Activated T-helper 2 cell treated with anti-CD3 and anti-CD28 coated beads, Interferon-gamma antibody, Interleukin-2, Interleukin-4, amounts not matched to agents 10 μg/mL and 5 μg/mL and 100 μg/mL, durations not matched to agents 14 hours and 24 hours and 36 hours (primary cell): ENCODE measurements at regions of chr11 and their contacts with region 1.

Region 1: DNA sequence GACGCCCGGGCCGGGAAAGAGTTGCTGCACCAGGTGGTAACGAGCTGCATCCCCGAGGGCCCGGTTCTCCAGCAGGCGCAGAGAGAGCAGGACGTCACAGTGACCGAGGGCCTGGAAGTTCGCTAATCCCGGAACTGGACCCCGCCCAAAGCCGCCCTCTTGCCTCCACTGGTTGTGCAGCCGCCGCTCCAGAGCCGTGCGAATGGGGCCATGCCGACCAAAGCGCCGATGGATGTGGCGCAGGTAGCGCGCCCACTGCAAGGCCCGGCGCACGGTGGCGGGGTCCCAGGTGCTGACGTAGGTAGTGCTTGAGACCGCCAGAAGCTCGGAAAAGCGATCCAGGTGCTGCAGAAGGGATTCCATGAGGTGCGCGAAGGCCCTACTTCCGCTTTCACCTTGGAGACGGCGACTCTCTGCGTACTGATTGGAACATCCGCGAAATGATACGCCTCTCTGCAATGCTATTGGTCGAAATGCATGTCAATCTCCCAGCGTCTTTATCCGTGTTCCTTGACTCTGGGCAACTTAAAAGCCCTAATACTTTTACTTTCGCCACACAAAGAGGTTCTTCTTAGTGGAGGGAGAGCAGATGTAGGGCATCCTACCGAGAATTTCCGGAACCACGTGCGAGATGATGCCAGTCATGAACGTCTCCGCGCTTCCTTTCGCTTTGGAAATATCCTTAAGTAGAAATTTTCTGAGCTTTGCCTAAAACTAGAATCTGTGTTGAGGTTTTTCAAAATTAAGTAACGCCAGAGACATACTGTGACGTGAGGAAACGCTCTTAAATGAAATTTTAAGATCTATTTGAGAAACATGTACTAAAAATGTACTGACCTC is at the start of gene FANCF:
- DNase-seq: peak; percentile 92
- H3K4me3 Mint-ChIP-seq: peak within 1 kb of the TSS; percentile 99
- H3K27ac Mint-ChIP-seq: peak within 1 kb of the TSS; percentile 98
- H3K4me1 Mint-ChIP-seq: peaks cover 22% of the 10 kb centered on the region
- H3K27me3 Mint-ChIP-seq: no peaks in the 10 kb centered on the region
- total RNA-seq, gene FANCF: 17.8 and 18.2 TPM in 2 replicates

Region 2: GRCh38 chr11:22666688-22667439 is 41.2 kb after region 1 on chr11:
- intact Hi-C with region 1: loop called (anchors 2 kb)
- DNase-seq: no peak
- H3K4me3 Mint-ChIP-seq: peak overlapping the region; percentile 81
- H3K27ac Mint-ChIP-seq: no peak overlapping the region
- H3K4me1 Mint-ChIP-seq: peaks cover 22% of the 10 kb centered on the region
- H3K27me3 Mint-ChIP-seq: peaks cover 55% of the 10 kb centered on the region

Region 3: DNA sequence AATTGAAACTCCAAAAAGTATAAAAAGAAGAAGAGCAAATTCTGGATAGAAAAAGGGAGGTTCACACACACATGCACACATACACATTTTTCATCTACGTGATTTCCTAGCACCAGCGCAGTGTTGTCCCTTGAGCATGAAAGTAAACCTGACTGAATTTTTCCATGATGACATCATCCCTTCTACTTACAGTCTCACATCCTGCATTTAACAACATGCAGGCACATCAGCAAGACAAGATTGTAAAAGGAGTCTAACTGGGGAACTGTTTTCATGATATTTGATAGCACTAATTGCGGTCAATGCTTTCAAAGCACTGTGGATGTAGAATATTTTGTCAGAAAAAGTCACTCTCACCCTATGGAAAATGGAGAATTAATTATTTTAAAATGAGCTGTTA is 77.4 kb after region 1 on chr11:
- intact Hi-C with region 1: loop called (anchors 1 kb)
- DNase-seq: no peak
- H3K4me3 Mint-ChIP-seq: no peak overlapping the region
- H3K27ac Mint-ChIP-seq: peak overlapping the region; percentile 65
- H3K4me1 Mint-ChIP-seq: peaks cover 14% of the 10 kb centered on the region
- H3K27me3 Mint-ChIP-seq: no peaks in the 10 kb centered on the region

Region 4: GRCh38 chr11:22829231-22830081 is 203.8 kb after region 1 on chr11 and contains the start of gene SVIP:
- intact Hi-C with region 1: loop called (anchors 1 kb)
- DNase-seq: peak; percentile 88
- H3K4me3 Mint-ChIP-seq: peak within 1 kb of the TSS; percentile 87
- H3K27ac Mint-ChIP-seq: peak within 1 kb of the TSS; percentile 84
- H3K4me1 Mint-ChIP-seq: peaks cover 10% of the 10 kb centered on the region
- H3K27me3 Mint-ChIP-seq: no peaks in the 10 kb centered on the region
- total RNA-seq, gene SVIP: 42.3 and 43.1 TPM in 2 replicates